Left colon (tissue), 2 donors: ENCODE measurements at regions of chr3 and their contacts with region 1.

Region 1: DNA sequence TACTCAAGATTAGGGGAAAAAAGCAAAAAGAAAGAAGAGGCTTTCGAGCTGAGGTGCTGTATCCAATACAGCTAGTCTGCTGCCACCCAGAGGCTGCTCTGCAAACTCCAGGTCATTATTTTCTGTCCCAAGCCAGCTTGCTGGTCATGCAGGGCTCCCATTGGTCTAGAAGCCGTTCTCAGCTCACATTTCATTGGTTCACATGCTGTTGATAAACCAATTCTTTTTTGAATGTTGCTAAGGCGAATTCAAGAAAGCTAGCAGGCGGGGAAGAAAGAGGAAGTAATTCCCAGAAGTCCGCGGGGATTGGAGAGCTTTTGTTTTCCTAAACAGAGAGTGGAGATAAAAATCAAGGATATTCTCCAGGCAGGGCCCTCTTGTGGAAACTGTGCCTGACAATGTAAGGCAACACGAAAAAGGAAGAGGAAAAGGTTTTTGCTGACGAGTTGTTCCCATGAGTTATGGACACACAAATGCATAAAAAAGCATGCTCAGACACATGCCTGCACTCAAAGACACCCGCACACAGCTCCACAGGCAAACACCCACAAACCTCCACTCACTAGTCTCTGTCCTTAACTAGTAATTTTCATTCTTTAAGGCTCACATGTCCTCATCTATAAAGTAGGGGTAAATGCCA is 33.4 kb downstream of the FSTL1 start:
- DNase-seq: peak; percentile 92 to 93
- ATAC-seq: peak; percentile 94

Region 2: DNA sequence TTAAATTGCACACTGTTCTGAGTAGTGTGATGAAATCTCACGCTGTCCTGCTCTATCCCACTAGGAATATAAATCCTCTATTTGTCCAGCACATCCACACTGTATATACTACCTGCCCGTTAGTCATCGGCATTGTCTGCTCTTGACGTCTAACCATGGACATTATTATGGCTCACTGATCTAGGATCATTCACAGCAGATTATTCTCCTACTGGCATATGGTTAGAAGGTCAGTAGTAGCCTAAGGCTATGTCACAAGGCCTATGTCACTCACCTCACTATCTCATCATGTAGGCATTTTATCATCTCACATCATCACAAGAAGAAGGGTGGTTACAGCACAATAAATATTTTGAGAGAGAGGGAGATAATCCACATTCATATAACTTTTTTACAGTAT is 444.1 kb before region 1 on chr3:
- intact Hi-C with region 1: no loop called
- DNase-seq: no peak
- ATAC-seq: no peak

Region 3: DNA sequence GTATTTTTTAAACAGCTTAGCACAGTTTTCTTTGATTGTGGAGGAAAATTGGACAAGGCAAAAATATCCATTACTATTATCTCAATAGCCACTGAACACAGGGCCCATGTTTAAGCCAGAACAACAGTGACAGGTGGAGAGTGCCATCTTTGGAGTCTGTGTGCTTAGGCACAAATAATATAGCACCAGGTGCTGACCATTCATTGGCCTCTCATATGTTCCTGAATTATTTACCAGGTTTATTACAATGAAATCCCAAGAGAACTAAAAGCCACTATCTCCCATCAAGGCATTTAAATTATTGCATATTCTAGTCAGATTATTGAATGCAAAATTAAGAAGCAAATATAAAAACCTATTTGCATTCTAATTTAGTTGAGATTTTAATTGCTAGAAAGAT is 172.0 kb before region 1 on chr3:
- intact Hi-C with region 1: loop called in 1 of 2 experiments (anchors 2 kb)
- DNase-seq: no peak
- ATAC-seq: no peak

Region 4: GRCh38 chr3:120604784-120605183 is 187.4 kb after region 1 on chr3:
- intact Hi-C with region 1: no loop called
- DNase-seq: no peak
- ATAC-seq: no peak

Region 5: GRCh38 chr3:120743556-120744195 is 326.3 kb after region 1 on chr3:
- intact Hi-C with region 1: no loop called
- DNase-seq: no peak
- ATAC-seq: no peak